ENCODE measurements at regions of chr12 and their contacts with region 1.

Region 1: GRCh38 chr12:32558903-32559302 is 120.2 kb upstream of the DNM1L start:
- DNase-seq: no peak
- ATAC-seq: peak; percentile 92
- H3K4me3 Mint-ChIP-seq: peak overlapping the region; percentile 36
- H3K27ac Mint-ChIP-seq: peak overlapping the region; percentile 71
- H3K4me1 Mint-ChIP-seq: peaks cover 23% of the 10 kb centered on the region
- H3K27me3 Mint-ChIP-seq: no peaks in the 10 kb centered on the region
- CTCF ChIP-seq: no peak

Region 2: GRCh38 chr12:32482226-32482625 is 76.7 kb before region 1 on chr12:
- CTCF ChIA-PET with region 1: no interaction called
- POLR2A ChIA-PET with region 1: no interaction called
- intact Hi-C with region 1: loop called (anchors 5 kb)
- DNase-seq: no peak
- ATAC-seq: peak; percentile 34
- H3K4me3 Mint-ChIP-seq: peak overlapping the region; percentile 68
- H3K27ac Mint-ChIP-seq: no peak overlapping the region
- H3K4me1 Mint-ChIP-seq: peaks cover 54% of the 10 kb centered on the region
- H3K27me3 Mint-ChIP-seq: no peaks in the 10 kb centered on the region
- CTCF ChIP-seq: no peak

Measured in activated B cell treated with CpG ODN at 0.5 μM for 24 hours (primary cell).